ENCODE measurements at regions of chr6 and their contacts with region 1.

Region 1: DNA sequence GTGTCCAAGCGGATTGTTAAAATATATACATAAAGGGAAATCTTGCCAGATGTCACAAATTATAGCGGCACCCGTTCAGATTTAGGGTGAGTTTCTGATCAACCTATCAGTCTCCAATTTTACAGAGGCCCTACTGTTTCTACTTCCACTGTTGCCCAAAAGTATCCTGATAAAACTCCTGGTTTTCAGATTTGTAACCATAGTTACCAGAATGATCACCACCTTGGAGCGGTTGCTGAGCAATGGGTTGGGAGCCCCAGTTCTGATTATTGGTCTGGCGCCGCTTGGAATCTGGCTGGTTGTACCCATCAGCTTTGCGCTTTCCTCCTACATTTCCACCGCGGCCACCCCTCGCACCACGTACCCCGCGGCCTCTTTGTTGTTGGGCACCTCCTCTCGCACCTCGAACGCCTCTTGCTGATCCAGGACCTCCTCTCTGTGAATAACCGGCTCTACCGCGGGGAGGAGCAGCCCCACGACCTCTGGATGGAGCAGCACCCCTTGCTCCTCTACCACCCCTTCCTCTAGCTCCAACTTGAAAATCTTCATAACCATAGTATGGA is 21.0 kb upstream of the SNX14 start:
- DNase-seq: no peak
- ATAC-seq: peak in 1 of 4 donors; percentile 22
- H3K4me3 ChIP-seq: no peak overlapping the region
- H3K27ac ChIP-seq: no peak overlapping the region
- H3K4me1 ChIP-seq: no peaks in the 10 kb centered on the region
- H3K27me3 ChIP-seq: no peaks in the 10 kb centered on the region
- CTCF ChIP-seq: no peak
- POLR2A ChIP-seq: no peak

Region 2: GRCh38 chr6:85628353-85628752 is 13.7 kb after region 1 on chr6:
- intact Hi-C with region 1: loop called in 1 of 10 experiments (anchors 2 kb)
- DNase-seq: no peak
- ATAC-seq: peak in 2 of 4 donors; percentile 13 to 43
- H3K4me3 ChIP-seq: no peak overlapping the region
- H3K27ac ChIP-seq: no peak overlapping the region
- H3K4me1 ChIP-seq: peaks cover 0 to 54% (median 15%) of the 10 kb centered on the region in 12 donors
- H3K27me3 ChIP-seq: no peaks in the 10 kb centered on the region
- CTCF ChIP-seq: no peak
- POLR2A ChIP-seq: no peak

Region 3: DNA sequence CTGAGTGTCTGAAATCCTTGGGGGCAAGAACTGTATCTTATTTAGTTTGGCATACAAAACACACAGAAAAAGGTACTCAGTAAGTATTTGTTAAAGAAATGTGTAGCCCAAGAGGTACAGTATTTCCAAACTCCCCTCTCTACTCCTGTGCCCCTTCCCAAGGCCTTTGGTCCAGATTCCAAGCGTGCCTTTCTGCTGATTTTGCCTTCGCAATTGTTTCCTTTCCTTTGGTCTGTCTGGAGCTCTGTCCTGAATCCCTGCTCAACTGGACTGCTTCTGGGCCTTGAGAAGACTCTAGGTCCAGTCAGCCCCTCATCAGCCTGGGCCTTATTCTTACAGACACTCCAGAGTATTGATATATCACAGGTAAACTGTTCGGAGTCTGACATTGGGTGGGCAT is 150.1 kb after region 1 on chr6:
- intact Hi-C with region 1: no loop called
- DNase-seq: no peak
- ATAC-seq: no peak
- H3K4me3 ChIP-seq: no peak overlapping the region
- H3K27ac ChIP-seq: no peak overlapping the region
- H3K4me1 ChIP-seq: no peaks in the 10 kb centered on the region
- H3K27me3 ChIP-seq: no peaks in the 10 kb centered on the region
- CTCF ChIP-seq: no peak
- POLR2A ChIP-seq: no peak

Measured in heart left ventricle (tissue), 16 donors.